Dorsolateral prefrontal cortex (tissue), 120 donors: ENCODE measurements at regions of chr20 and their contacts with region 1.

Region 1: GRCh38 chr20:57391074-57391554 is at the start of gene RBM38:
- DNase-seq: peak in 7 of 10 donors; percentile 30 to 84 (median 59)
- H3K4me3 ChIP-seq: peak within 1 kb of the TSS; percentile 38 to 80 (median 65)
- H3K27ac ChIP-seq: peak within 1 kb of the TSS in 48 of 59 donors; percentile 5 to 96 (median 66)
- H3K27me3 ChIP-seq: no peaks in the 10 kb centered on the region
- CTCF ChIP-seq: peak in 1 of 56 donors; percentile 17
- total RNA-seq, gene RBM38: 8.5 to 26.9 (median 13.2) TPM

Region 2: DNA sequence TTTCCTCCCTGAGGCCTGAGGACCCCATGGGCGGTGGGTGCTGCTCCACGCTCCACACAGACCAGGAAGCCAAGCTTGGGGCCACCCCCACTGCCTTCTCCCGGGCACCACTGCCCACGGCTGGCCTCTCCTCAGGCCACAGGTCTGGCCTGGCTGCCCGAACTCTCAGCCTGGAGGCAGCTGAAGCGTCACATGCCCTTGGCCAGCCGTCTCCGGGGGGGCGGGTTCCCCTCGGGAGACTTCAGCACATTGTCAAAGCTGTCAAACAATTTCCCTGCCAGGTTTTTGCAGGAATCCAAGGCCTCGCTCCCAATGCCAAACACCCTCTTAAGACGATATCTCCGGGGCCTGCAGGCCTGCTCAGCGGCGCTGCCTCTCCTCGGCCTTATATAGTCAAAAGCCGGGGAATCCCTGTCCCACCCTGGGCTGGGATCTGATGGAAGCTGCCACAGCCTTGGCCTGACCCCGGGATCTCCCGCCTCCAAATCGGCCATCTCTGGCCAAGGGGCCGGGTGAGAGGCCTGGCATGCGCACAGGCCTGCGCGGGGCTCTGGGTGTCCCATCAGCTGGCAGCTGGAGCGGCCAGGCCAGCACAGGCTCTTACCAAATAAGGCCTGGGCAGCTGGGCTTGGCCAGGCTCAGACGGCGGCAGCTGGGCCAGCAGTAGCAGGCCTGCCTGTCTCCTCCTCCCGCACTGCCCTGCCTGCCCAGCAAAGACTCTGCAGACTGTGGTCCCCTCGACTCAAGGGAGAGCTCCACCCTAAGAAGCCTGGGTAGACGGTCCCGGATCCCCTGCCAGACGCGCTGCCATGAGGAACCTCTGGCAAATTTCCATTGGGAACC is 49.8 kb after region 1 on chr20:
- intact Hi-C with region 1: loop called (anchors 1 to 2 kb)
- DNase-seq: peak; percentile 36 to 97 (median 90)
- H3K4me3 ChIP-seq: peak overlapping the region in 2 of 59 donors; percentile 23
- H3K27ac ChIP-seq: peak overlapping the region; percentile 76 to 98 (median 92)
- H3K27me3 ChIP-seq: no peaks in the 10 kb centered on the region
- CTCF ChIP-seq: peak in 10 of 56 donors; percentile 3 to 27 (median 16)

Region 3: DNA sequence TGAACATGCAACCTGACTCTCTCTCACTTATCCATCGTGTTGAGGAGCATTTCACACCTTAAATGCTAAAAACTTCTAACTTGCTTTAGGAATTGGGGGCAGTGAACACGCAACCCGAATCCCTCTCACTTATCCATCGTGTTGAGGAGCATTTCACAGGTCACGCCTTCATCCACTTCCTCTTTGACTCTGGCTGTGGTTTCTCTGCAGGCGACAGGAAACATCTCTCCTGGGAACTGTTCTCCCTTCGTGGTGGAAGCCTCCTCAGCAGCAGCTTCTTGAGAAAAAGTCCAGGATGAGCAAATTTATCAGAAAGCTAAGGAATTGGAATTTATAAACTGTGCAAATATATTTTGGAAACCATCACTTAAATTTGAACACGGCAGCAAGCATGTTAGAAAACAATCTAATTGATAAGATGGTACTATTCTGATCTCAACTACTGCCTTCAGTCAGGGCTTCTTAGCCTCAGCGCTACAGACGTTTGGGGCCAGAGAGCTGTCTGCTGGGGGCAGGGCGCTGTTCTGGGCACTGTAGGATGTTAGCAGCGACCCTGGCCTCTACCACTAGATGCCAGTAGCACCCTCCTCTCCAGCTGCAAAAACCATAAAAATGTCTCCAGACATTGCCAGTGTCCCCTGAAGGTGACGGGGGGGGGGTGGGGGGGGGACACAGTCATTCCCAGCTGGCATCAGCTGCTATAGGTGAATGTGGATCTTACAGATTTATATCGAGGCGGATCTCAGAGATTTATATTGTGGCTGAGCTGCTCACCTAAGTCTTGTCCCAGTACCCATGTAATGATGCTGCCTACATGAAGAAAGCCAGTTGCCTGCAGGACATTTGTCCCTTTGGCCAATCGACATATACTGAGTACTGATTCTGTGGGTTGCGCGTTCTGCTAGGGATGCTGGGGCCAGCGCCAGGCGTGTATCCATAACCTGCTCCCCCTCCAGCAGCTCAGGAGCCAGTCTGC is 107.6 kb after region 1 on chr20:
- intact Hi-C with region 1: loop called in 1 of 2 experiments (anchors 2 kb)
- DNase-seq: peak in 2 of 10 donors; percentile 29 to 47
- H3K4me3 ChIP-seq: no peak overlapping the region
- H3K27ac ChIP-seq: no peak overlapping the region
- H3K27me3 ChIP-seq: no peaks in the 10 kb centered on the region
- CTCF ChIP-seq: peak in 23 of 56 donors; percentile 4 to 42 (median 22)

Region 4: GRCh38 chr20:57596998-57597939 is 206.2 kb after region 1 on chr20:
- intact Hi-C with region 1: loop called (anchors 5 to 10 kb)
- DNase-seq: peak in 9 of 10 donors; percentile 47 to 82 (median 59)
- H3K4me3 ChIP-seq: peak overlapping the region in 29 of 59 donors; percentile 3 to 55 (median 29)
- H3K27ac ChIP-seq: peak overlapping the region in 1 of 59 donors; percentile 9
- H3K27me3 ChIP-seq: peaks cover 0 to 6% (median 0%) of the 10 kb centered on the region in 45 donors
- CTCF ChIP-seq: peak; percentile 86 to 100 (median 96)